GM10248 (cell line): ENCODE measurements at regions of chr20 and their contacts with region 1.

Region 1: GRCh38 chr20:25338109-25339023 is 52.3 kb downstream of the ABHD12 start:
- DNase-seq: no peak
- CTCF ChIP-seq: no peak

Region 2: DNA sequence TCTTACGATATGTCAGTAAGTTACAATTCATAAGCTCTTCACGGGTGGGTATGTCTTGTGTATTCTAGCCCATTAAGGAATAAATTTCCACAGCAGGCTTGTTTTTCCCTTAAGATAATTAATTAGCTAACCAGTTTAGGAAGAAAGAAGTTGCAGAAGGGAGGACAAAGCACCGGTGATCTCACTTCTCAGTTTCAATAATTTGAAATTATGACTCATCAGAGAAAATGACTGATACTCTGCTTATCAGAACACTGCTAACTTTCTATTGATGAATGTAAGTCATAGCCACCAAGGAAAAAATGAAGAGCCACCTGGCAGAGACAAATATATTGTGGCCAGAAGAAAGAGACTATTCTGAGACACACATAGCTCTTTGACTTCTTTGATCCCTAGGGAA is 177.9 kb before region 1 on chr20:
- CTCF ChIA-PET with region 1: no interaction called
- POLR2A ChIA-PET with region 1: no interaction called
- DNase-seq: no peak
- CTCF ChIP-seq: no peak

Region 3: GRCh38 chr20:25233016-25233820 is 105.1 kb before region 1 on chr20:
- CTCF ChIA-PET with region 1: no interaction called
- POLR2A ChIA-PET with region 1: no interaction called
- DNase-seq: no peak
- CTCF ChIP-seq: no peak

Region 4: DNA sequence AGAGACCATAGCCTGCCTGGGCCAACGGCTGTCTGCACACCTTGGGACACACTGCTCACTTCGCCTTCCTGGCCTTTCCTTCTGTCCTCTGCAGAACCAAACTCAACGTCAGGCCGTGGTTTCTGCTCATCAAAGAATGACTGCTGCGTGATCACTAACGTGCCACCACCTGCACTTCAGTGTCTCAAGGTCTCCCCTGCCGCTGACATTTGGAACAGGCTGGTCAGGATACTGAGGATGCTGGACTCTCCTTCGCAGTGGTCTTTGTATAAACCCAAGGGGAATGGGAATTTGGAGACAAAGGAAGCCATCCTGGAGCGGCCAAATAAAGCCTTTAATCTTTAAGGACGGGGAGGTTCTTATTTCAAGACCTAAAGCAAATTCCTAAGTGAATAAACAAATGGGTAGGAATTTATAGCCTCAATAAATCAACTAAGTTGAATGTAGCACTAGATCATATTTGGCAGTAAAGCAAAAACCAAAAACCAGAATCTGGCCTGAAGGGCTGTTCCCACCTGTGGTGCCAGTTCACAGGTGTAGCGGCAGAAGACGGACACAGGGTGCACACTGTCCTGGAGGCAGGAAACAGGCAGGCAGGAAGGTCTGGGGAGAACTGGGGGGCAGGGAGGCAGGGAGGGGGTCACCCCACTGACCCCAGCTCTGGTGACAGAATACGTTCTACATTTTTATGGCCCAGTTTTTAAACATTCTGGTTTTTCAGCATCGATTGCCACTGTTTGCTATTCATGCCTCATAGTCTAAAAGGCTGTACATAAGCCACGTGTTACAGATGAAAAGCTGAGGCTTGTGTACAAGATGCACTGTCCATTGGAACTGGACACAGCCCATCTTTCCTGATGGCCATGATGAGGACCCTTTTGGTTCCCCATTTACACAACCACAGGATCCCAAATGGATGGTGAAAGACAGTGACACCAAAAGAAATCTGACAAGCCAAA is 15.7 kb after region 1 on chr20:
- CTCF ChIA-PET with region 1: interaction called, 10 read pairs
- POLR2A ChIA-PET with region 1: no interaction called
- DNase-seq: no peak
- CTCF ChIP-seq: no peak